ENCODE measurements at regions of chr12 and their contacts with region 1.

Region 1: DNA sequence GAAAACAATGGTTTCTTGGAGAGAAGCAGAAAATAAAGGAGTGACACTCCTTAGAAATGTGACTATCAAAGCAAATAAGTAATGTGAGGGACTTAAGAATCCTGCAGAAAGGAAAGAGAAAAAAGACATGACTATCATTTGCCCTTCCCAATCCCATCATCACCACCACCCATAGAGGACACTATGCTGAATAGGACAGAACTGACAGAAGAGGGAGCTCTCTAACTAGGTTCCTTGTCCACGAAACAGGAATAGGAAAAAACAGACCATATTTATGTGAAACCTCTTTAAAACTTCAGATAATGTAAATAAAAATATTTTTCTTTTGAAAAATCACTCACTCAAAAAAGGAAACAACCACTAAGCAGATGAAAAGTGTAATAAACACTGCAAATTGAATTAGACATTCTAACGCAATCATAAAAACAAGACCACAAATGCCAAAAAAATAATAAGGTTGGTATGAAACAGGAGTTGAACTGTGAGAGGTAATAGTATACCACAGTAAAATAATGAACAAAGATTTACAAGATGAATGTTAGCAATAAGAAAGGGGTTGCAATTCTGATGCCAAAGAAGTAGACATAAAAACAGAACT is 24.1 kb downstream of the KLRD1 start:
- DNase-seq: peak in 1 of 2 experiments; percentile 19
- H3K4me3 ChIP-seq: no peak overlapping the region
- H3K27ac ChIP-seq: no peak overlapping the region
- H3K4me1 ChIP-seq: no peaks in the 10 kb centered on the region
- H3K27me3 ChIP-seq: no peaks in the 10 kb centered on the region
- CTCF ChIP-seq: peak; percentile 79

Region 2: GRCh38 chr12:9933958-9934357 is 397.8 kb before region 1 on chr12:
- CTCF ChIA-PET with region 1: no interaction called
- POLR2A ChIA-PET with region 1: no interaction called
- intact Hi-C with region 1: no loop called
- DNase-seq: no peak
- H3K4me3 ChIP-seq: no peak overlapping the region
- H3K27ac ChIP-seq: no peak overlapping the region
- H3K4me1 ChIP-seq: no peaks in the 10 kb centered on the region
- H3K27me3 ChIP-seq: no peaks in the 10 kb centered on the region
- CTCF ChIP-seq: no peak

Region 3: GRCh38 chr12:10235761-10236631 is 95.7 kb before region 1 on chr12:
- CTCF ChIA-PET with region 1: interaction called, 3 read pairs
- POLR2A ChIA-PET with region 1: no interaction called
- intact Hi-C with region 1: loop called (anchors 2 kb)
- DNase-seq: peak; percentile 32 to 43
- H3K4me3 ChIP-seq: no peak overlapping the region
- H3K27ac ChIP-seq: no peak overlapping the region
- H3K4me1 ChIP-seq: no peaks in the 10 kb centered on the region
- H3K27me3 ChIP-seq: no peaks in the 10 kb centered on the region
- CTCF ChIP-seq: peak; percentile 96

Region 4: DNA sequence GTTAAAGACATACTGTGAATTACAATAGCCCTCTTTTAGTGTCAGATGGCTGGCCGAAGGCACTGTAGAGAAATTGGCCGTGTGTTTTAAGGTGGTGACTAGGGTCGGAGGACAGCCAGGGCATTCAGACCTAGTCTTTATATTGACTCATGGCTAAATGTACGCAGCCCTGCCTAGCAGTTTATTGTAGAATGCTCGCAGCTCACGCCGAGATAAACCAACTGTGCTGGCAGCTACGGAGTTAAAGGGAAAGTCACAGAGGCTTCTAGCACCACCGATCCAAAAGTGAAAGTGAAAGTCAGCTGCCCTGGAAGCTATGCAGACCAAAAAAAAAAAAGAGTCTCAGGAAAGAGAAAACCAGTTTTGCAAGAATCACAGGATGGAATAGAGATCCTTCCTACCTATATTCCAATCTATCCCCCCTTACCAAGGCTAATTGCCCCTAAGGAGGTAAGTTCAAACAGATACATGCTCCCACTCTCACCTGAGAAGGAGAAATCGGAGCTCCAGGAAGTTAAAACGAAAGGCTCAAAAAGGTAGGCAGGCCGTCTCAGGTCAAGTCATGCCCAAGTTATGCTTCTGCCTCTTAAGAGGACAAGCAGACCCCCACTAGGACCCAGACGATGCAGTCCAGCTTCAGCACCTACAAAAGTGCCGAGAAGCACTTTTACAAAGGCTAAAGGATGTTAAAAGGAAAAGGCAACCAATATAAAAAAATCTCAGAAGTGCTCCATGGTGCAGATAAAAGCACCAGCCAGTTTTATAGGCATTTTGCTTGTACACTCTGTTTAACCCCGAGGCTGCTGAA is 33.3 kb after region 1 on chr12:
- CTCF ChIA-PET with region 1: interaction called, 4 read pairs
- POLR2A ChIA-PET with region 1: interaction called, 4 read pairs
- intact Hi-C with region 1: loop called (anchors 5 kb)
- DNase-seq: peak; percentile 73 to 79
- H3K4me3 ChIP-seq: peak overlapping the region; percentile 77
- H3K27ac ChIP-seq: peak overlapping the region; percentile 63
- H3K4me1 ChIP-seq: peaks cover 30% of the 10 kb centered on the region
- H3K27me3 ChIP-seq: no peaks in the 10 kb centered on the region
- CTCF ChIP-seq: no peak

Region 5: GRCh38 chr12:10501031-10501430 is 169.3 kb after region 1 on chr12:
- CTCF ChIA-PET with region 1: no interaction called
- POLR2A ChIA-PET with region 1: no interaction called
- intact Hi-C with region 1: loop called (anchors 1 kb)
- DNase-seq: no peak
- H3K4me3 ChIP-seq: no peak overlapping the region
- H3K27ac ChIP-seq: no peak overlapping the region
- H3K4me1 ChIP-seq: no peaks in the 10 kb centered on the region
- H3K27me3 ChIP-seq: no peaks in the 10 kb centered on the region
- CTCF ChIP-seq: peak; percentile 34; the same call in 1 of the 2 replicates

Region 6: GRCh38 chr12:10562306-10562933 is 230.7 kb after region 1 on chr12:
- CTCF ChIA-PET with region 1: no interaction called
- POLR2A ChIA-PET with region 1: no interaction called
- intact Hi-C with region 1: loop called (anchors 1 kb)
- DNase-seq: peak in 1 of 2 experiments; percentile 28
- H3K4me3 ChIP-seq: no peak overlapping the region
- H3K27ac ChIP-seq: no peak overlapping the region
- H3K4me1 ChIP-seq: no peaks in the 10 kb centered on the region
- H3K27me3 ChIP-seq: no peaks in the 10 kb centered on the region
- CTCF ChIP-seq: peak; percentile 87

Region 7: GRCh38 chr12:10613349-10614055 is 281.8 kb after region 1 on chr12 and contains the start of gene MAGOHB:
- CTCF ChIA-PET with region 1: no interaction called
- POLR2A ChIA-PET with region 1: no interaction called
- intact Hi-C with region 1: loop called (anchors 5 kb)
- DNase-seq: peak; percentile 86 to 97
- H3K4me3 ChIP-seq: peak within 1 kb of the TSS; percentile 90
- H3K27ac ChIP-seq: peak within 1 kb of the TSS; percentile 85
- H3K4me1 ChIP-seq: peaks cover 29% of the 10 kb centered on the region
- H3K27me3 ChIP-seq: no peaks in the 10 kb centered on the region
- CTCF ChIP-seq: no peak
- total RNA-seq, gene MAGOHB: 53.8 and 91.4 TPM in 2 replicates